ENCODE measurements at regions of chr2 and their contacts with region 1.

Region 1: GRCh38 chr2:54522624-54523281 is 66.6 kb downstream of the SPTBN1 start:
- DNase-seq: peak; percentile 72
- ATAC-seq: peak; percentile 51

Region 2: GRCh38 chr2:54115284-54116137 is 407.2 kb before region 1 on chr2 and contains the start of gene ACYP2:
- intact Hi-C with region 1: loop called (anchors 5 kb)
- DNase-seq: peak; percentile 98
- ATAC-seq: peak; percentile 99
- total RNA-seq, gene ACYP2: 62.6 TPM

Region 3: DNA sequence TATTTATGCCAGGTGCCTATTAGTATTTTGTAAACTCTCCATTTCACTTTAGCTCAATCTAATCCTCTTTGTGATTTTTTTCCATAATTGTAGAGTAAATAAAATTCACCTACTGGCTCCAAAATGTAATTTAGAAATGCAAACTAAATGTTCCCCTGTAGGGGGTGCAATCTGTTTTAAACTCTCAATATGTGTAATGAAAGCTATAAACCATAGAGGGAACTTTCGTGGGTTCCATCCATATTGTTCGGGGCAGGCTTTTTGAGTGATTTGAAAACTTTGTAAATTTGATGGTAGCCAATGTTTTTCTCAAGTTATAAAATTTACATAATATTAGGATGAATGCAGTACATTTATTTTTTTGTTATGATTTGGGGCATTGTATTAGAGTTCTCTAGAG is 316.2 kb before region 1 on chr2:
- intact Hi-C with region 1: loop called (anchors 5 kb)
- DNase-seq: no peak
- ATAC-seq: no peak

Region 4: GRCh38 chr2:54634564-54635511 is 112.1 kb after region 1 on chr2:
- intact Hi-C with region 1: loop called (anchors 5 kb)
- DNase-seq: peak; percentile 70
- ATAC-seq: peak; percentile 59

Region 5: DNA sequence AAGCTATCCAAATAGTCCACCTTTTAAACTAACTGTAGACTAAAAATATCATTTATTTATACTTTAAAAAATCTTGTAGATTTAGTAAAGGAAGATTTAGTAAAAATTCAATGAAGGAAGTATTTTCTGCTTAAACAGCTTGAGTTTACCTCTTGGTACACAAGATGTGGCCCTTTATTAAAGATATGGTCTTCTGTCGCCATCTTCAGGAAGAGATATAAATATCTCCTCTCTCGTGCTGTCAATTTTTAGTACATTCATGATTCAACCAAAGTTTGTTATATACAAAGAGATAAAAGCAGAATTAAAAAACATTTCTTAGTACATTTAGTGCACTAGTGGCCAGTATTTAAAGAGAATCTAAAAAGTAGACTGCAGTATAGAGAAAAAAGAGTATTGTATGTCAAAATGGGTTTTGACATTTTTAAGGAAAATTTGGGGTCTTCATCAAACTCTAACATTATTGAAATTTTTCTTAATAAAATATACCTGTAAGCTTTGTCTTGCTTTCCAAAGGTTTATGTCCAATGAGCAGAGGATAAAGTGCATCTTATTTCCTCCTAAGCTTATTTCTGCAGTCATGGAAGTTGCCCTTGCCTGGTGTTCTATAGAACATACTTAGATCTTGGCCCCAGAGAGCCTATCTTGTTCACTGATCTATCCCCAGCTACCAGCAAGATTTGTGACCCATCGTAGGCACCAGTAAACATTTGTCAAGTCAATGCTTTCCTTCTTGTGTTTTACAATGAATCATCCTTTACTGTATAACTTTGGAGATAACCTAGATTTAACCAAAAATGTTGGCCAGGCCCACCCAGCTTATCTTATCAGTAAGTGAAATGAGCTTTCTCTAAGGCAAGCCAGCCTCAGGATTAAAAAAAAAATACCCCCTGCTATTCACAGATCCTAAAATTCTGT is 182.2 kb after region 1 on chr2:
- intact Hi-C with region 1: loop called (anchors 5 kb)
- DNase-seq: no peak
- ATAC-seq: no peak